ENCODE measurements at regions of chr16 and their contacts with region 1.

Region 1: DNA sequence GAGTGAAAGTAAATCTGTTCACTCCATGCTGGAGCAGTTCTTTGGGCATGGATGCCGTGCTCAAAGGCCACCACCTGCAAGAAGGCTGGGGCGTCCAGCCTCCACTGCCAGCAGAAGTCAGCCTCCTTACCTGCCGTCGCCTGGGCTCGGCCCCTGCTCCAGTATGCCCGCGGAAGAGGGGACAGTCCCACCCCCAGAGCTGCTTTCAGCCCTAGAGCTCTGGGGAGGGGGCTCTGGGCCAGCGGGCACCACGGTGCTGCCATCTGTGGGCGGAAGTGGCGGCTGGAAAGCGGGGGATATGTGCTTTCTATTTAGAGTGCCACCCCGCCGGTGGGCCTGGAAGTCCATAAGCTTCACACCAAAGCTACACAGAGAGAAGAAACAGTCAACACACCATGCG is 75.9 kb downstream of the ARHGAP17 start:
- DNase-seq: no peak
- ATAC-seq: no peak
- H3K4me3 ChIP-seq: no peak overlapping the region
- H3K27ac ChIP-seq: no peak overlapping the region
- H3K4me1 ChIP-seq: no peaks in the 10 kb centered on the region
- H3K27me3 ChIP-seq: no peaks in the 10 kb centered on the region
- CTCF ChIP-seq: no peak
- POLR2A ChIP-seq: no peak

Region 2: GRCh38 chr16:24700549-24701392 is 238.5 kb before region 1 on chr16:
- in situ Hi-C with region 1: no loop called
- intact Hi-C with region 1: no loop called
- DNase-seq: peak; percentile 86 to 92
- ATAC-seq: peak; percentile 99
- H3K4me3 ChIP-seq: peak overlapping the region in 3 of 4 donors; percentile 1 to 38 (median 27)
- H3K27ac ChIP-seq: peak overlapping the region; percentile 74 to 92 (median 85)
- H3K4me1 ChIP-seq: peaks cover 16 to 23% of the 10 kb centered on the region in 2 donors
- H3K27me3 ChIP-seq: no peaks in the 10 kb centered on the region
- CTCF ChIP-seq: peak in 3 of 5 experiments; percentile 31 to 43 (median 35)
- POLR2A ChIP-seq: no peak

Region 3: DNA sequence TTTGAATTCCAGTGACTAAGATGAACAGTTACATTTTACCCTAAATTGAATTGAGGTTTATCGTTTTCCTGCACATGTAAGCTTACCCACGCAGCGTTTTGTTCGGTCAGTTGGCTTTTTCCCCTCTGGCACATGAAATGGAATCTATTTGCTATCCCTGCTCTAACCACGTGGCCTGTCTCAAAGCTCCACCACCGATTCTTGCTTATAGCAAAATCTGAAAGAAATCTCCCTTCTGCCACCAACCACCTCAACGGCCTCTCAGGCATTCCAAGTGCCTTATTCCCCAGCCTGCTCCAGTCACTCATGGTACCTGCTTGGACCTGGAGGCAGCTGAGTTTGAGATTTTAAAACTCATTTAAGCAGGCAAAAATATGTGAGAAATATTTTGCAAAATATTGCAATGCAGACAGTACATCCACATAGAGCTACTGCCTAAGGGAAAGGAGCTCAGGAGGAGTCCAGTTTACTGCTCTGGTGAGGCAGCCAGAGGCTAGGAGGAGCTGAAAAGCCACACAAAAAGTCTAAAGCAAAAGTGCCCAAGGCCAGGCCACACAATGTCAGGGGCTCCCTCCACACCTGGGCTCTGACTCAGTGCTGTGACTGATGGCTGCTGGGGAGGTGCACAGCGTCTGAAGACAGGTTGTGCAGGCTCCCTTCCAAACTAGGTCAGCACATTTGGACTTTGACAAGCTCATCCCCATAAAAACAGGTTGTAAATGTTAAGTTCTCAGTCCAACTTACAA is 49.5 kb after region 1 on chr16:
- in situ Hi-C with region 1: no loop called
- intact Hi-C with region 1: no loop called
- DNase-seq: no peak
- ATAC-seq: peak in 1 of 2 donors; percentile 22
- H3K4me3 ChIP-seq: peak overlapping the region in 2 of 4 donors; percentile 1 to 27
- H3K27ac ChIP-seq: peak overlapping the region; percentile 76 to 89 (median 82)
- H3K4me1 ChIP-seq: peaks cover 93 to 95% of the 10 kb centered on the region in 2 donors
- H3K27me3 ChIP-seq: no peaks in the 10 kb centered on the region
- CTCF ChIP-seq: no peak
- POLR2A ChIP-seq: no peak

Region 4: GRCh38 chr16:25235991-25236390 is 296.8 kb after region 1 on chr16:
- in situ Hi-C with region 1: loop called in 1 of 4 experiments (anchors 25 kb)
- intact Hi-C with region 1: no loop called
- DNase-seq: peak in 1 of 2 donors; percentile 25
- ATAC-seq: peak in 1 of 2 donors; percentile 53
- H3K4me3 ChIP-seq: no peak overlapping the region
- H3K27ac ChIP-seq: no peak overlapping the region
- H3K4me1 ChIP-seq: no peaks in the 10 kb centered on the region
- H3K27me3 ChIP-seq: no peaks in the 10 kb centered on the region
- CTCF ChIP-seq: no peak
- POLR2A ChIP-seq: no peak